ENCODE measurements at regions of chr18 and their contacts with region 1.

Region 1: DNA sequence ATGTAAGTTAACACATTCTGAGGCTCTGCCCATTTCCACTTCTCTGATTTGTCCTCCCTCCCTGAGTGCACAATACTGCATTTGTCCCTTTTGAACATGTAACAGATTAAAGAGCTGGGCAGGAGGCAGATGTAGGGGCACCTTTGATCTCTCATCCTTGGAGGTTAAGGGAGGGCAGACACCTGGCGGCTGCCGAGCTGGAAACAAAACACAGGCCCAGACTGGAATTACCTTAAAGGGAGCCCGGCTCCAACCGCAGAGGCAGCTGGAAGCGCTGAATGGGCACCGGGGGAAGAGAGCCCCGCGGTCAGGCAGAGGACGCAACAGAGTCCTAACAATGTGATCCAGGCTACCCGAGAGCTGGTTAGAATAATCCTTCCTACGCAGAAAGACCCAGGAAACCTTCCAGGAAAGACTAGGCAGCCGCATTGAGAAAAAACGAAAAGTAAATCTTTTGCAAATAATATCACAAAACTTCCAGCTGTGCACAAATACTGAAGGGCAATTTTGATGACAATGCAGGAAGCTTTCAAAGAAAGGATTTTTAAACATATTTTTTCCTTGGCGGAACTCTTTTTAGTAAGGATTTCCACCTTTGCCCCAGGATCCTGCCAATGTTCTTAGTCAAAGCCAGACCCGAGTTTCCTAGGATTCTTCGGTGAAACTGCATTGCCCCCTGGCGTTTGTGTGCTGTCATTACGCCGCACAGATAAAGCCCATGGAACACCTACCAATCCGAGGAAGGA is 216.0 kb downstream of the TGIF1 start:
- DNase-seq: peak; percentile 81 to 86
- H3K4me3 ChIP-seq: peak overlapping the region in 2 of 4 experiments; percentile 27 to 45; a peak in 3 of 8 replicates
- H3K27ac ChIP-seq: no peak overlapping the region; the same call in 1 of the 2 replicates
- H3K4me1 ChIP-seq: peaks cover 3 to 13% (median 9%) of the 10 kb centered on the region in 4 experiments; a peak in 6 of 7 replicates
- H3K27me3 ChIP-seq: no peaks in the 10 kb centered on the region
- CTCF ChIP-seq: peak; percentile 82 to 91 (median 86)
- EP300 ChIP-seq: no peak; a peak in 1 of 3 replicates
- POLR2A ChIP-seq: peak in 1 of 2 experiments; percentile 69; a peak in 2 of 3 replicates
- RAD21 ChIP-seq: peak; percentile 96 to 98

Region 2: GRCh38 chr18:3297025-3297984 is 368.6 kb before region 1 on chr18:
- CTCF ChIA-PET with region 1: interaction called, 34 read pairs
- POLR2A ChIA-PET with region 1: interaction called, 6 read pairs
- DNase-seq: peak; percentile 96
- H3K4me3 ChIP-seq: peak overlapping the region; percentile 71 to 98 (median 90)
- H3K27ac ChIP-seq: peak overlapping the region; percentile 95
- H3K4me1 ChIP-seq: no peaks in the 10 kb centered on the region
- H3K27me3 ChIP-seq: no peaks in the 10 kb centered on the region
- CTCF ChIP-seq: peak; percentile 75 to 100 (median 92); a peak in 3 of 4 replicates
- EP300 ChIP-seq: peak in 1 of 2 experiments; percentile 64; a peak in 1 of 3 replicates
- POLR2A ChIP-seq: peak; percentile 92 to 99
- RAD21 ChIP-seq: peak; percentile 56 to 58

Region 3: DNA sequence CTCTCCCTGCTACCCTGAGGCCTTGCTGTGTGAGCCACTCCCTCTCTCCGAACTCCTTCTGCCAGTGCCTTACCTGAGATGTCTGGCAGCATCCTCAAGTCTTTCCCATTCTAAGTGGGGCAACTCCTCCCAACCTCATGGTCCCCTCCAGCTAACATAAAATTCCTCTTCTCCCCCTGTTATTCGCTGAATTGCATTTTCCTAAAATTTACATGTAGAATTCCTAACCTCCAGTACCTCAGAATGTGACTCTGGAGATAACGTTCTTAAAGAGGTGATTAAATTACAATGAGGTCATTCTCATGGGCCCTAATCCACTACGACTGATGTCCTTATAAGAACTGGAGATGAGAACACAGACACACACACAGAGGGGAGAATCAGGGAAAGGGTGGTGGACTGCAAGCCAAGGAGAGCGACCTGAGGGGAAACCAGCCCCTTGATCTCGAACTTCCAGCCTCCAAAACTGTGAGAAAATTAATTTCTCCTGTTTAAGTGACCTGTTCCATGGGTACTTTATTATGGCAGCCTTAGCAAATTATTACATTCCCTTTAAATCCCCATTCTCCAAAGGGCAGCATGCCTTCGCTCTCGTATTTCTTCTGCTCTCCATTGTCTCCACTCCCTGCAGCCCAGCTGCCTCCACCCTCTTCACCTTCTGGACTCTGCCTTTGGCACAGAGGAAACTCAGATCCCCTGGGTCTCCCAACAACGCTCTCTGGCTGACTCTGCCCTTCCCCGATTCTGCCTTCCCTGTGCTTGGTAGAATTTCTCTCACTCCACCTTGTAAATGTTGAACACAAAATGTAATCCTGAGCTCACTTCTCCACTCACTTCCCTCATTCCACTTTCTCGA is 145.5 kb before region 1 on chr18:
- CTCF ChIA-PET with region 1: interaction called, 13 read pairs
- POLR2A ChIA-PET with region 1: no interaction called
- DNase-seq: no peak
- H3K4me3 ChIP-seq: no peak overlapping the region
- H3K27ac ChIP-seq: no peak overlapping the region
- H3K4me1 ChIP-seq: peaks cover 0 to 7% (median 5%) of the 10 kb centered on the region in 4 experiments; a peak in 5 of 7 replicates
- H3K27me3 ChIP-seq: no peaks in the 10 kb centered on the region; a peak in 1 of 7 replicates
- CTCF ChIP-seq: no peak
- EP300 ChIP-seq: no peak
- POLR2A ChIP-seq: no peak
- RAD21 ChIP-seq: no peak

Region 4: DNA sequence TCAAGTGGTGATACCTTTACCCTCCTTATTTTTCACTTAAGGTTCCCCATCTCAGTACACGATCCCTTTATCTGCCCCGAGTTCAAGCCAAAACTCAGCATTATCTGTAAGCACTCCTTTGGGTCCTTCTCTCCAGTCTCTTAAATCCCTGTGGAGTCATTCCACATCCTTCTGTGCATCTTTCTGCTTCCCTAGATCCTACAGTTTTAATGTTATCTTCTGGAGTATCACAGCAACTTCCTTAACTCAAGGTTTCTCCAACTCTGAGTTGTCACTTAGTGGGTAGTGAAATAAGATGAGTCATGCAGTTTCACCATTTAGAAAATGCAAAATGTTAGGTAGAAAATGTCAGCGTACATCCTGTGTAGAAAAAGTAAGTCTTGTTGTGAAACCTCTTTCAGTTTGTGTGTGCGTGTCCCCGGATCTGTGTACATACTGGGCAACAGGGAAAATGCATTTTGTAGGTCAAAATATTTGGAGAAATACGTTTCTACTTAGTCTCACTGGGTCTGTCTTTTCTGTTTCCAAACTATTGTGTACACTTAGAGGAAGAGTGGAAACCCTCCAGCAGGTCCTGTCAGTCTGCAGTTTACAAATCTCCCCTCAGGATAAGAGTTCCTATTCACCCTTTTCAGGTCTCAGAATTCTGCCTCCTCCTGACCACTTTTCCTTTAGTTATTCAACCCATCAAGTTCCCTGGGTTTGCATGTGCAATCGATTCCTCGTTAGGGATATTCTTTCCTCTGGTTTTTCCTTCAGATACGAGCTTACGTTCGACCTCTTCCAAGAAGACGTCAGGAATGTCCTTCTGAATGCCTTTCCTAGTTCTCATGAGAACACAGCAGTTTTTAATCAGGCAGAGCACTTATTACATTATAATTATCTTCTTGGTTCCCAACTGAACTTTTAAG is 61.2 kb before region 1 on chr18:
- CTCF ChIA-PET with region 1: interaction called, 48 read pairs
- POLR2A ChIA-PET with region 1: interaction called, 37 read pairs
- DNase-seq: no peak
- H3K4me3 ChIP-seq: peak overlapping the region; percentile 47 to 91 (median 80)
- H3K27ac ChIP-seq: peak overlapping the region; percentile 87
- H3K4me1 ChIP-seq: peaks cover 5 to 13% (median 9%) of the 10 kb centered on the region in 4 experiments; a peak in 5 of 7 replicates
- H3K27me3 ChIP-seq: no peaks in the 10 kb centered on the region
- CTCF ChIP-seq: no peak
- EP300 ChIP-seq: no peak
- POLR2A ChIP-seq: peak; percentile 4 to 8
- RAD21 ChIP-seq: no peak

Region 5: GRCh38 chr18:3645384-3646156 is 20.4 kb before region 1 on chr18:
- CTCF ChIA-PET with region 1: interaction called, 22 read pairs
- POLR2A ChIA-PET with region 1: interaction called, 3 read pairs
- DNase-seq: no peak
- H3K4me3 ChIP-seq: no peak overlapping the region
- H3K27ac ChIP-seq: no peak overlapping the region
- H3K4me1 ChIP-seq: peaks cover 0 to 8% (median 3%) of the 10 kb centered on the region in 4 experiments; a peak in 4 of 7 replicates
- H3K27me3 ChIP-seq: no peaks in the 10 kb centered on the region
- CTCF ChIP-seq: no peak
- EP300 ChIP-seq: no peak
- POLR2A ChIP-seq: no peak
- RAD21 ChIP-seq: no peak

Region 6: DNA sequence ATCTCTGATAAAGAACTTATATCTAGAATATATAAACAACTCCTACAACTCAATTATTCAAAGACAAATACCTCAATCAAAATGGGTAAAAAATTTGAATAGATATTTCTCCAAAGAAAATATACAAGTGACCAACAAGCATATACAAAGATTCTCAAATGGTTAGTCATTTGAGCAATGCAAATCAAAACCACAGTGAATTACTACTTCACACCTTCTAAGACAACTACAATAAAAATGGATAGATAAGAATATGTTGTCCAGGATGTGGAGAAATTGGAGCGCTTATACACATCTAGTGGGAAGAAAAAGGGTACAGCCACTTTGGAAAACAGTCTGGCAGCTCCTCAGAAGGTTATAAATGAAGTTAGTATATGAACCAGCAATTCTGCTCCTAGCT is 116.9 kb after region 1 on chr18:
- CTCF ChIA-PET with region 1: no interaction called
- POLR2A ChIA-PET with region 1: no interaction called
- DNase-seq: no peak
- H3K4me3 ChIP-seq: no peak overlapping the region
- H3K27ac ChIP-seq: no peak overlapping the region
- H3K4me1 ChIP-seq: no peaks in the 10 kb centered on the region
- H3K27me3 ChIP-seq: no peaks in the 10 kb centered on the region
- CTCF ChIP-seq: no peak
- EP300 ChIP-seq: no peak
- POLR2A ChIP-seq: no peak
- RAD21 ChIP-seq: no peak

Region 7: GRCh38 chr18:3869848-3870247 is 203.9 kb after region 1 on chr18:
- CTCF ChIA-PET with region 1: interaction called, 10 read pairs
- POLR2A ChIA-PET with region 1: no interaction called
- DNase-seq: no peak
- H3K4me3 ChIP-seq: no peak overlapping the region
- H3K27ac ChIP-seq: no peak overlapping the region
- H3K4me1 ChIP-seq: peaks cover 0 to 4% (median 1%) of the 10 kb centered on the region in 4 experiments; a peak in 3 of 7 replicates
- H3K27me3 ChIP-seq: no peaks in the 10 kb centered on the region
- CTCF ChIP-seq: peak in 2 of 3 experiments; percentile 54 to 58; a peak in 2 of 4 replicates
- EP300 ChIP-seq: no peak
- POLR2A ChIP-seq: no peak
- RAD21 ChIP-seq: peak; percentile 85 to 88

Measured in H1 (cell line).